OCI-LY7 (cell line): ENCODE measurements at regions of chr1 and their contacts with region 1.

Region 1: DNA sequence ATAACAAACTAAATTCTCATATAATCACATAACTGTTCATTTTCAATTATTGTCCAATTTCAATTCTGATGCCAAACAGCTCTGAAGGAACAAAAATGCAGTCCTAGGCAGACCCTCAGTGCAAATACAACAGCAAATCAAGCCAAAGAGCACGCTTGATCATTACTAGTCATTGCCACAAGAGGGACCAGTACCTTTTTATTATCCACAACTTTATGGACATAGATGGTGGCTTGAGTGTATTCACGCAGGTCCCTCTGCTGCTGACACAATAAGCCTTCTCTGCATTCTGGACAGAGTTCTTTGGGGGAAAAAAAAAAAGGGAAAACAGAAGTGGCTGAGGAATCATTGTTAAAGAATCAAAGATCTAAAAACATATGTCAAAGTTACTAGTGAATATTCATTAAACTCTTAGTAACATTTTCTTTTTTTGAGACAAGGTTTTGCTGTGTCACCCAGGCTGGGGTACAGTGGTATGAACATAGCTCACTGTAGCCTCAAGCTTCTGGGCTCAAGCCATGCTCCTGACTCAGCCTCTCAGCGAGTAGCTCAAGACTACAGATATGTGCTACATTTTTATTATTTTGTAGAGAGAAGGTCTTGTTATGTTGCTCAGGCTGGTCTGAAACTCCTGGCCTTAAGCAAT is 34.3 kb upstream of the RAP1GAP start:
- DNase-seq: peak; percentile 63
- H3K4me3 ChIP-seq: no peak overlapping the region
- H3K27ac ChIP-seq: no peak overlapping the region
- H3K4me1 ChIP-seq: no peaks in the 10 kb centered on the region
- CTCF ChIP-seq: peak; percentile 81

Region 2: DNA sequence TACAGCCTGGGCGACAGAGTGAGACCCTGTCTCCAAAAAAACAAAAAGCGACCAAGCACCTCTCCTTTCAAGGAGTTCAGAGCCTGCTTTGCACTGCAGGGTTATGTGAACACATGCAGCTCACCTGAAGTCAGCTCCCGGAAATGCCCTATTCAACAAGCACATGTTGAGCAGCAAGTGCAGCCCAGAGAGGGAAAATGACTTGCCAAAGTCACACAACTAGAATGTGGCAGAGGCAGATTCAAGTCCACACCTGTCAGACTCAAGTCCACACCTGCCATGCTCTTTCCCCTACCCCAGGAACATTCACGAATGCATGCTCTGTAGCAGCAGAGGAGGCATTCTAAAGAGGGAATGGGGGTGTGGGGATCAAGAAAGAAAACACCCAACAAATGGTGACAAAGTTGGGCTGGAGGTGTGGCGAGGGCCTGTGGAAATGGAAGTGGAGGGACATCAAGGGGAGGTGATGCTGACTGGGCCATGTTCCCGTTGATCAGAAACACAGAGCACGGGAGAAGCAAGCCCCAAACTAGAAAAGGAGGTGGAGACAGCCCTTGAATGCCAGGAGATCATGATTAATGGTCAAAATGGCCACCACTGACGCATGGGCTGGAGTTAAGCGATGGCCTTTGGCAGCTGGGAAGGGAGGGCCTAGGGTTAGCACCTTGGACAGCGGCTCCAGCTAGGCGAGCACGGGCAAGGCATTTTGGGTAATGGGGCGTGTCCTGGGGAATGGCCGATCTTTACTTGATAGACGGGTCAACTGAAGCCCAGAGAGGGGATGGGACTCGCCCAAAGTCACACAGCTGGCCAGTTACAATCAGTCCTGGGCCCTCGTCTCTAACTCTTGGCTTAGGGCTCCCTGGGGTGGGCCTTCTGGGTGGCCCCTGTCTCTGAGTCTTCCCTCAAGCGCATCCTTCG is 55.8 kb before region 1 on chr1:
- CTCF ChIA-PET with region 1: no interaction called
- POLR2A ChIA-PET with region 1: no interaction called
- intact Hi-C with region 1: no loop called
- DNase-seq: peak; percentile 57
- H3K4me3 ChIP-seq: no peak overlapping the region
- H3K27ac ChIP-seq: no peak overlapping the region
- H3K4me1 ChIP-seq: no peaks in the 10 kb centered on the region
- CTCF ChIP-seq: no peak

Region 3: GRCh38 chr1:21782868-21783678 is 79.6 kb after region 1 on chr1 and contains the start of gene USP48:
- CTCF ChIA-PET with region 1: no interaction called
- POLR2A ChIA-PET with region 1: no interaction called
- intact Hi-C with region 1: loop called (anchors 2 kb)
- DNase-seq: peak; percentile 99
- H3K4me3 ChIP-seq: peak within 1 kb of the TSS; percentile 85
- H3K27ac ChIP-seq: peak within 1 kb of the TSS; percentile 94
- H3K4me1 ChIP-seq: peaks cover 21% of the 10 kb centered on the region
- CTCF ChIP-seq: no peak; the same call in 1 of the 2 replicates
- total RNA-seq, gene USP48: 45.0 and 56.0 TPM in 2 replicates